HCT116 (cell line): ENCODE measurements at regions of chr2 and their contacts with region 1.

Region 1: DNA sequence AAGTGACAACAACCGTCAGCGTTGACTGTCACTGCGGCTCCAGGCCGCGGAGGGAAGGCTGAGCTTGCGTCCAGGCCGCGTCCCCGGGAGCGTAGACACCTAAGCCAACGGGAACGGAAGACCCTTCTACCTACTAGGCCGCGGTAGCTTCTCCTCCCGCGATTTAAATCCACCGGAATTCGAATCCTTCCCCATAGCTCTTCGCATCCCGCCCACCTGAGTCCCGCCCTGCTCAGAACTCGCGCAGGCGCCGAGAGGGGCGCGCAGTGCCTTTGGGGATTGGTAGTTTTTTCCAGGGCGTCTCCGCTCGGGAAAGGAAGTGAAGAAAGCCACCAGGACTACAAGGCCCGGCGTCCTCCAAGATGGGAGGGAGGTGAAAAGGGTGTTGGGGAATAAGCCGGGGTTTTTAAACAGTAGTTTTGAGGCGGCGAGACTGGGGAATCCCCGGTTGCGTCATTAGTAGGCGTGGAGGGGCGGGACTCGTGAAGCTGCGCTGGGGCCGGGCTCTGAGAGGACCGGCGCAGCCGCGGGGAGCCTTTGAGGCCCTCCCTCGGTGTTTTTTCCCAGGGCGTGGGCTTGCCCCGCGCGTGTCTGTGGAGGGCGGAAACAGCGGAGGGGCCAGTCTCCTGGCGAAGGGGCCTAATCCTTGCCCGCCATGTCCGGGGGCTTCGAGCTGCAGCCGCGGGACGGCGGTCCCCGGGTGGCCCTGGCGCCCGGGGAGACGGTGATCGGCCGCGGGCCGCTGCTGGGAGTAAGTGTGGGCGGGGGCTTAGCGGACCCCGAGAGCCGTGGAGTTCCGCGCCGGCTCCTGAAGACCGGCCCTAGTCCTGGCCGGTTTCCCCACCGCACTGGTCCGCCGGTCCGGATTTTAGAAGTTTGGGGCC is at the starts of genes APLF and FBXO48:
- DNase-seq: peak; percentile 98
- ATAC-seq: peak; percentile 98
- H3K4me3 ChIP-seq: peak within 1 kb of the TSS; percentile 82 to 85
- H3K27ac ChIP-seq: peak within 1 kb of the TSS; percentile 48; the same call in 1 of the 2 replicates
- H3K4me1 ChIP-seq: peaks cover 4 to 18% of the 10 kb centered on the region in 2 experiments; a peak in 3 of 4 replicates
- H3K27me3 ChIP-seq: no peaks in the 10 kb centered on the region
- CTCF ChIP-seq: no peak
- POLR2A ChIP-seq: peak; percentile 59
- RAD21 ChIP-seq: no peak
- total RNA-seq, gene APLF: 1.6 TPM
- total RNA-seq, gene FBXO48: 0.91 TPM

Region 2: GRCh38 chr2:67836866-67837265 is 630.5 kb before region 1 on chr2:
- CTCF ChIA-PET with region 1: no interaction called
- POLR2A ChIA-PET with region 1: no interaction called
- RAD21 ChIA-PET with region 1: no interaction called
- intact Hi-C with region 1: no loop called
- DNase-seq: no peak
- ATAC-seq: no peak
- H3K4me3 ChIP-seq: no peak overlapping the region
- H3K27ac ChIP-seq: no peak overlapping the region
- H3K4me1 ChIP-seq: no peaks in the 10 kb centered on the region
- H3K27me3 ChIP-seq: peaks cover 12% of the 10 kb centered on the region; the same call in 1 of the 2 replicates
- CTCF ChIP-seq: no peak
- POLR2A ChIP-seq: no peak
- RAD21 ChIP-seq: no peak

Region 3: GRCh38 chr2:68434981-68435380 is 32.3 kb before region 1 on chr2:
- CTCF ChIA-PET with region 1: no interaction called
- POLR2A ChIA-PET with region 1: no interaction called
- RAD21 ChIA-PET with region 1: no interaction called
- intact Hi-C with region 1: no loop called
- DNase-seq: no peak
- ATAC-seq: no peak
- H3K4me3 ChIP-seq: no peak overlapping the region
- H3K27ac ChIP-seq: no peak overlapping the region
- H3K4me1 ChIP-seq: no peaks in the 10 kb centered on the region
- H3K27me3 ChIP-seq: no peaks in the 10 kb centered on the region
- CTCF ChIP-seq: no peak
- POLR2A ChIP-seq: no peak
- RAD21 ChIP-seq: no peak

Region 4: GRCh38 chr2:68594674-68595492 is 127.6 kb after region 1 on chr2:
- CTCF ChIA-PET with region 1: interaction called, 16 read pairs
- POLR2A ChIA-PET with region 1: no interaction called
- RAD21 ChIA-PET with region 1: no interaction called
- intact Hi-C with region 1: no loop called
- DNase-seq: peak; percentile 31
- ATAC-seq: peak; percentile 87
- H3K4me3 ChIP-seq: no peak overlapping the region
- H3K27ac ChIP-seq: no peak overlapping the region
- H3K4me1 ChIP-seq: no peaks in the 10 kb centered on the region; a peak in 1 of 4 replicates
- H3K27me3 ChIP-seq: no peaks in the 10 kb centered on the region
- CTCF ChIP-seq: peak; percentile 41 to 91 (median 88); a peak in 5 of 6 replicates
- POLR2A ChIP-seq: no peak
- RAD21 ChIP-seq: peak; percentile 41

Region 5: DNA sequence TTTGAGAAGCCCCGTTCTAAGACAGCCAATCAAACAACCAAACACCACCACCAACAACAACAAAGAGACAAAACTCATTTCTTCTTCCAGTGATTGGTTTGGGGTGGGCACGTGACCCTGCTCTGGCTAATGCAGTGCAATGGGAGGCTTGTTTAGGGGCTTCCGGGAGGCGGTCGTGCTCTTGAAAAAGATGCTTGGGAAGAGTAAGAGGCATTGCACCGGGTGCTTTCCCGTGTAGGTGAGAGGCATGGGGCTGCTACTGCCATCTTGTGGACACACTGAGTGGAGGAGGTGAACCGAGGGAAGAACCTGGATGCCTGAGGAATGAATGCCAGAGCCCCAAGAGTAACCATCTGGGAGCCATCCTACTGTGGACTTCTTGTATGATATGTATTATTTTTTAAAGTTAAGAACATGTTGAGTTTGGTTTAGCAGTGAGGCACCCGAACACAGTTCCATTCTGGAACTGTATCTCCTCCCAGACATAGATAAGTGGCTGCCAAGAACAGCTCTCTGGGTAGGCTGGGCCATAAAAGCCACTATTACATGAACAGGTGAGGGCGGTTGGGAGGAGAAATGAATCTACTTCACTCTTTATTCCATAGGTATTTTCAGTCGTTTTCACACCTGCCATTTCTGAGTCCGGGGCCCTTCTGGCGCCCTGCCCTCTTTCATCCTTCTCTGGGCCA is 248.2 kb after region 1 on chr2:
- CTCF ChIA-PET with region 1: interaction called, 32 read pairs
- POLR2A ChIA-PET with region 1: no interaction called
- RAD21 ChIA-PET with region 1: no interaction called
- intact Hi-C with region 1: loop called (anchors 2 kb)
- DNase-seq: peak; percentile 62
- ATAC-seq: peak; percentile 99
- H3K4me3 ChIP-seq: no peak overlapping the region
- H3K27ac ChIP-seq: no peak overlapping the region
- H3K4me1 ChIP-seq: no peaks in the 10 kb centered on the region
- H3K27me3 ChIP-seq: peaks cover 16% of the 10 kb centered on the region
- CTCF ChIP-seq: peak; percentile 50 to 89 (median 79); a peak in 5 of 6 replicates
- POLR2A ChIP-seq: no peak
- RAD21 ChIP-seq: peak; percentile 61

Region 6: DNA sequence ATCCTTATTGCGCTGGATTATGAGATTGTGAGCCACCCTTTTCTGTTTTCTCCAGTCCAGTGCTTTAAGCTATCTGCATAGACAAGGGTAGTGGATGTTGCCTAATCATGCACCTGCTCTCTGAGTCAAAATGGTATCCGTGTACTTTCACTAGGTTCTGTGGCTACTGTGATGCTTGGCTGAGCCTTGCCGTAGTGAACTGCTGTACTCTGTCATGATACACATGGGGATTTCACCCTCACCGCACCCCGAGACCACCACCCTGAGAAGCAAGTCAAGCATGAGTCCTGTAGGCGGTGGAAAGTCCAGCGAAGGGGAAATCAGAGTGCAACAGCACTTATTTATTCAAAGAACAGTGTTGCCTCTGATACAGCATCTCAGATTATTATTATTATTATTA is 322.3 kb after region 1 on chr2:
- CTCF ChIA-PET with region 1: no interaction called
- POLR2A ChIA-PET with region 1: no interaction called
- RAD21 ChIA-PET with region 1: no interaction called
- intact Hi-C with region 1: no loop called
- DNase-seq: no peak
- ATAC-seq: no peak
- H3K4me3 ChIP-seq: no peak overlapping the region
- H3K27ac ChIP-seq: no peak overlapping the region
- H3K4me1 ChIP-seq: no peaks in the 10 kb centered on the region
- H3K27me3 ChIP-seq: no peaks in the 10 kb centered on the region; the same call in 1 of the 2 replicates
- CTCF ChIP-seq: no peak
- POLR2A ChIP-seq: no peak
- RAD21 ChIP-seq: no peak

Region 7: GRCh38 chr2:68837164-68837860 is 370.0 kb after region 1 on chr2:
- CTCF ChIA-PET with region 1: interaction called, 11 read pairs
- POLR2A ChIA-PET with region 1: no interaction called
- RAD21 ChIA-PET with region 1: no interaction called
- intact Hi-C with region 1: loop called (anchors 1 kb)
- DNase-seq: peak; percentile 58
- ATAC-seq: peak; percentile 98
- H3K4me3 ChIP-seq: no peak overlapping the region
- H3K27ac ChIP-seq: no peak overlapping the region
- H3K4me1 ChIP-seq: peaks cover 0 to 5% of the 10 kb centered on the region in 2 experiments; a peak in 1 of 4 replicates
- H3K27me3 ChIP-seq: no peaks in the 10 kb centered on the region
- CTCF ChIP-seq: peak; percentile 75 to 94 (median 89)
- POLR2A ChIP-seq: no peak
- RAD21 ChIP-seq: peak; percentile 57

Region 8: DNA sequence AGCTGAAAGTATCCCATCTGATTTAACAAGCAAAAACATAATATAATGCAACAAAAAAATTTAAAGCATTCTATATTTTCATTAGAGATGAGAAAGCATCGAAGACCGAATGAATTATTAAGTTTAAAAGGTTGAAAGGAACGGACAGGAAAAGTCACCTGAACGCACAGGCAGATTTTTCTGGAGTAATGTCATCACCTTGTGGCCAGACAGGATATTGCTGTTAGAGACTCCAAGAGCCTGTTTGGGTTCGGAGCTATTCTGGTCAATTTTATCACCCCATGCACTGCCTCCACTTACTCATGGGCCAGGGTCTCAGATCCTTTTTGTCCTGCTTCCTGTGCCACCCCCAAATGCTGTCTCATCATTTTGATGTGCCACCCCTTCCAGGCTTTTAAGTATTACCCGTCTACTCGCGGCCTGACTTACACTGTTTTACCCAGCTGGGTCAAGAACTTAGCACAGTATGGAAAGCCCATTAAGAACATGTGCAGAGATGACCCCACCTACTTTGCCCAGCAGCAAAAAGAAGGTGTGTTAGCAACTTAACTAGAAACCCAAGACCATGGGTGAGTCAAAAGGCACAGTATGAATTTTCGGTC is 458.1 kb after region 1 on chr2:
- CTCF ChIA-PET with region 1: interaction called, 45 read pairs
- POLR2A ChIA-PET with region 1: interaction called, 3 read pairs
- RAD21 ChIA-PET with region 1: interaction called, 4 to 11 read pairs
- intact Hi-C with region 1: loop called (anchors 1 kb)
- DNase-seq: peak; percentile 48
- ATAC-seq: peak; percentile 94
- H3K4me3 ChIP-seq: no peak overlapping the region
- H3K27ac ChIP-seq: no peak overlapping the region
- H3K4me1 ChIP-seq: no peaks in the 10 kb centered on the region; a peak in 1 of 4 replicates
- H3K27me3 ChIP-seq: no peaks in the 10 kb centered on the region
- CTCF ChIP-seq: peak; percentile 87 to 89 (median 89)
- POLR2A ChIP-seq: no peak
- RAD21 ChIP-seq: peak; percentile 93

Region 9: GRCh38 chr2:69306822-69307578 is 839.7 kb after region 1 on chr2:
- CTCF ChIA-PET with region 1: interaction called, 6 read pairs
- POLR2A ChIA-PET with region 1: no interaction called
- RAD21 ChIA-PET with region 1: no interaction called
- intact Hi-C with region 1: loop called (anchors 10 kb)
- DNase-seq: peak; percentile 33
- ATAC-seq: peak; percentile 92
- H3K4me3 ChIP-seq: peak overlapping the region; percentile 56 to 61
- H3K27ac ChIP-seq: peak overlapping the region; percentile 39; the same call in 1 of the 2 replicates
- H3K4me1 ChIP-seq: peaks cover 4 to 12% of the 10 kb centered on the region in 2 experiments; a peak in 1 of 4 replicates
- H3K27me3 ChIP-seq: no peaks in the 10 kb centered on the region
- CTCF ChIP-seq: peak; percentile 74 to 99 (median 94)
- POLR2A ChIP-seq: no peak
- RAD21 ChIP-seq: peak; percentile 93